GM12878 (cell line): ENCODE measurements at regions of chr20 and their contacts with region 1.

Region 1: DNA sequence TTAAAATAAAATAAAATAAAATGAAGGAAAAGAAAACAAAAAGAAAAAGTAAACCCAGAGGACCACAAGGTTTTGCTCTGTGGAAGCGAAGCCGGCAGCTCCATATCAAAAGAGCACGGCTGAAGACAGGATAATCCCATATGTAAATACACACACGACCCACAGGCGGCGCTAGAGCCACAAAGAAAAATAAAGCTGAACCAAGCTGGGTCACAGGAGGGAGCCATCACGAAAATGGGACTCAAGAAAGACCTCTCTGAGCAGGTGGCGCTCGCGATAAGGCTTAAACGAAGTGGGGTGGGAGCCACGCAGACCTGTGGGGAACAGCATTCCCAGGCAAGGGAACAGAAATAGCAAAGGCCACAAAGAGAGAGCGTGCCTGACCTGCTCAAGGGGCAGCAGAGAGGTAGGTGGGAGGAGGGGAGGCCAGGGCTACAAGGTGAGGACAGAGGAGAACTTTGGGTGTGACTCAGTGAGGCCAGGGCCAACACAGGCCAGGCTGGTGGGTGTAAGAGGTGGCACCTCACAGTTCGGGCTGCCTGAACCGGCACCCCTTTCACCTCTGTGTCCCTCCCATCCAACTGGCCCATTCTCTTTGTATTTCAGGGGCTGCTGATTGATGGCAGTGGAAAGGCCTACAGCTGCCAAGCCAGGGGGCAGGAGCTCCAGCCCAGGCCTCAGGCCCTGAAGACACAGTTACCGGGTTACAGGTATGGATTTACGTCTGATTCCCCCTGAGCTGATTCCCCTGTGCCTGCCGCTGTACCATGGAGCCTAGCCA is 26.0 kb downstream of the PTGIS start:
- DNase-seq: peak; percentile 35
- ATAC-seq: peak; percentile 91
- H3K4me3 ChIP-seq: no peak overlapping the region
- H3K27ac ChIP-seq: no peak overlapping the region
- H3K4me1 ChIP-seq: no peaks in the 10 kb centered on the region
- H3K27me3 ChIP-seq: no peaks in the 10 kb centered on the region
- CTCF ChIP-seq: peak; percentile 79 to 95 (median 95)
- EP300 ChIP-seq: no peak
- POLR2A ChIP-seq: no peak
- RAD21 ChIP-seq: peak; percentile 91

Region 2: DNA sequence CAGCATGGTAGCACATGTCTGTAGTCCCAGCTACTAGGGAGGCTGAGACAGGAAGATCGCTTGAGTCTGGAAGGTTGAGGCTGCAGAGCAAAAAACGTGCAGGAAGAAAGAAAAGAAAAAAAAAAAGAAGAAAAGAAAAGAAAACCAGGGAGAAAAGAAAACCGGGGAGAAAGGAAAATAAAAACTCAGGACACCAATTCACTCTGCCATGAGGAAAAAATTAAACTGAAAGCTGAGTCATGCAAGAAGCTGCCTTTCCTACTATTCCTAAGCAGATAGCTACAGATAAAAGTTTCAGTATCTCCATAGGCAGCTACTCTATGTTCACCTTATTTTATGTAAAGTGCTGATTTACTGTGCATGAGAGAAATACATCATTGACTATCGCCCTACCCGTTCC is 15.5 kb after region 1 on chr20:
- CTCF ChIA-PET with region 1: interaction called, 40 read pairs
- POLR2A ChIA-PET with region 1: no interaction called
- RAD21 ChIA-PET with region 1: interaction called, 3 read pairs
- SMC1A ChIA-PET with region 1: interaction called, 4 read pairs
- in situ Hi-C with region 1: no loop called
- intact Hi-C with region 1: no loop called
- DNase-seq: no peak
- ATAC-seq: no peak
- H3K4me3 ChIP-seq: no peak overlapping the region
- H3K27ac ChIP-seq: no peak overlapping the region
- H3K4me1 ChIP-seq: no peaks in the 10 kb centered on the region
- H3K27me3 ChIP-seq: peaks cover 0 to 2% of the 10 kb centered on the region in 2 experiments; a peak in 3 of 4 replicates
- CTCF ChIP-seq: no peak
- EP300 ChIP-seq: no peak
- POLR2A ChIP-seq: no peak
- RAD21 ChIP-seq: no peak

Region 3: DNA sequence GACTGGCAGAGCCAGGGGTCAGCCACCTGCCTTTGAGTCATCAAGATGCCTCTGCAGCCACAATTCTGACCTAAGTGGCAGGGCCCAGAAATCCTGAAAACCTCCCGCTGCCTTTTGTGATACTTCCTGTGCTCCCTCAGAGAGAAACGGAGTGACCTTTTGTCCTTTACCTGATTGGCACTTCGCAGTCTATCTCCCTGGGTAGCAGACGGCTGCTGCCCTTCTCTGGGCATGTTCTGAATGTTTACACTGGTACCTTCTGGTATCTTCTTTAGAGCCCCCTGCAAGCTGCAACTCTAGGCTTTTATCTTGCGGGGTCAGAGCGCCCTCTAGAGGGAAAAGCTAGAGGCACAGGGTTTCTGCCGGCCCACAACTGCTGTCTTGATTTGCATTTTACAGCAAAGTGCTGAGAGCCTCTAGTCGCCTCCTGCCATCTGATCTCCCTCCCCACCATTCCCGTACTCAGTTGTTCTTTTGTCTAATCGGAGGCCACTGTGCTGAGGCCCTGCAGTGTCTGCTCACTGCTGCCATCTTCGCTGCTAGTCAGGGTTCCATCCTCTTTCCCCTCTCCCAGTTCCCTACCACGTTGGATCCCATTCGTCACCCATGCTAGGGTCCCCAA is 346.5 kb after region 1 on chr20:
- CTCF ChIA-PET with region 1: interaction called, 9 read pairs
- POLR2A ChIA-PET with region 1: no interaction called
- RAD21 ChIA-PET with region 1: interaction called, 5 read pairs
- SMC1A ChIA-PET with region 1: no interaction called
- in situ Hi-C with region 1: no loop called
- intact Hi-C with region 1: loop called (anchors 1 kb)
- DNase-seq: peak; percentile 9
- ATAC-seq: peak; percentile 88
- H3K4me3 ChIP-seq: no peak overlapping the region
- H3K27ac ChIP-seq: no peak overlapping the region
- H3K4me1 ChIP-seq: peaks cover 13% of the 10 kb centered on the region
- H3K27me3 ChIP-seq: no peaks in the 10 kb centered on the region
- CTCF ChIP-seq: peak; percentile 81 to 85 (median 84)
- EP300 ChIP-seq: no peak
- POLR2A ChIP-seq: no peak
- RAD21 ChIP-seq: peak; percentile 89

Region 4: DNA sequence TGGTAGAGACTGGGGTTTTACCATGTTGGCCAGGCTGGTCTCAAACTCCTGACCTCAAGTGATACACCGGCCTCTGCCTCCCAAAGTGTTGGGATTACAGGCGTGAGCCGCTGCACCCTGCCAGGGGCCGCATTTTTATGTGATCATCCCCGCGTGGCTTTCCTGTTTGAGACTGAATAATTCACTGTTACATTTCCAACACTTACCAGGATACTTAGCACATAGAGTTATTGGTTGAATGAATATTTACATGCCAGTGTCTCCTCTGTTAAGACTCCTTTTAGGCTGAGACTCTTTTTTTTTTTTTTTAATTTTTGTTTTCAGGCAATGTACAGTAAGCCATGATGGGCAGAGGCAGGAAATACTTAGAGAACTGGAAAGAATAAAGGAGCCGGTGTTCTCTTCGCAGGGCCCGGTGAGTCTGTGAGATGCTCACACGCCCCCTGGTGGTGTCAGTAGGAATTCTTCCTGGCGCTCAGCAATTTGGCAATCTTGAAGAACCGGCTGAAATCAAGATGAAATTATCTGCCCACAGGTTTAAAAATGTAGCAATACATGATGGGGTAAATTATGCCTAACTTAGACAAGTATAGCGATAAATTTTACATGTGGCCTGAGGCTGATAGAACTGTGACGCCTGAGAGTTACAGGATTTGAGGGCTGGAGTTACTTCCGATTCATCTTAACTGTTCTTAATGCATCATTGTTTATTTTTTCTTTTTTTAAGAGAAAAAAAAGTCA is 386.6 kb after region 1 on chr20:
- CTCF ChIA-PET with region 1: interaction called, 18 read pairs
- POLR2A ChIA-PET with region 1: no interaction called
- RAD21 ChIA-PET with region 1: interaction called, 7 read pairs
- SMC1A ChIA-PET with region 1: interaction called, 3 read pairs
- in situ Hi-C with region 1: no loop called
- intact Hi-C with region 1: loop called (anchors 2 kb)
- DNase-seq: no peak
- ATAC-seq: peak; percentile 93
- H3K4me3 ChIP-seq: no peak overlapping the region
- H3K27ac ChIP-seq: no peak overlapping the region
- H3K4me1 ChIP-seq: no peaks in the 10 kb centered on the region
- H3K27me3 ChIP-seq: no peaks in the 10 kb centered on the region
- CTCF ChIP-seq: peak; percentile 85 to 90 (median 88)
- EP300 ChIP-seq: no peak
- POLR2A ChIP-seq: no peak
- RAD21 ChIP-seq: peak; percentile 81